ENCODE measurements at regions of chr11 and their contacts with region 1.

Region 1: GRCh38 chr11:6757373-6757967 is 14.3 kb downstream of the OR2AG2 start:
- DNase-seq: peak; percentile 12
- H3K4me3 ChIP-seq: no peak overlapping the region
- CTCF ChIP-seq: peak; percentile 62

Region 2: DNA sequence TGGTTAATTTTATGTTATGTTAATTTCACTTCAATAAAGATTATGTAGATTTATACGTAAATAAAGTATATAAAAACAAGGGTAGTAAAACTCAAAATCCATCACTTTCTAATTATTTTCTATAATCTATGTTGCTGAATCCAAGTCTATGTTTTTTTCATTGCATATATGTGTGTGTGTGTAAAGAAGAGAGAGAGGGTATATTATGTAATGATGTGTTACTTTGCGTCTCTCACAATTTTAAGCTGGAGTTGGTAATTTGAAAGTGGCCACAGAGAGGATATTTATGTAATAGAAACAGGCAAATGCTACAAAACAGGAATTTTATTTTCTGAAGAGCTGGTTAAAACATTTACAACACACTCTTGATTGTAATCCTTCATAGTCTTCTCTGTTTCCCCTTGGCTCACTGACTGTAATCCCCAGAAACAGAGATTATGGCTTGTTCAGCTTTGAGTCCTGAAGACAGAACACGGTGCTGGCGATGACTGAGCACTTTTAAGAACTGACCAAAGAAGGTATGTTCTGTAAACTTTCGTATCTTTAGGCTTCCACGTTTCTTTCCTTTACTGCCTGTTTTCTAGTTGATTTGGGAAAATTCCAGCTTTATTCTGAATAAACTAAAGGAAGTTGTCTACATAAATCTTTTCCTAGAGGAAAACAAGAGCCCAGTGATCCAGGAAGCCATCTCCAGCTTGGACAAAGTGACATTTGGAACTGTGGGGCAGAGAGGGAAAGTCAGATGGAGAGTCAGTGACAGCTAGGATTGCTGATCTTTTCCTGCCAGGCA is 29.3 kb before region 1 on chr11:
- CTCF ChIA-PET with region 1: interaction called, 141 read pairs
- POLR2A ChIA-PET with region 1: no interaction called
- DNase-seq: no peak
- H3K4me3 ChIP-seq: no peak overlapping the region
- CTCF ChIP-seq: no peak

Region 3: DNA sequence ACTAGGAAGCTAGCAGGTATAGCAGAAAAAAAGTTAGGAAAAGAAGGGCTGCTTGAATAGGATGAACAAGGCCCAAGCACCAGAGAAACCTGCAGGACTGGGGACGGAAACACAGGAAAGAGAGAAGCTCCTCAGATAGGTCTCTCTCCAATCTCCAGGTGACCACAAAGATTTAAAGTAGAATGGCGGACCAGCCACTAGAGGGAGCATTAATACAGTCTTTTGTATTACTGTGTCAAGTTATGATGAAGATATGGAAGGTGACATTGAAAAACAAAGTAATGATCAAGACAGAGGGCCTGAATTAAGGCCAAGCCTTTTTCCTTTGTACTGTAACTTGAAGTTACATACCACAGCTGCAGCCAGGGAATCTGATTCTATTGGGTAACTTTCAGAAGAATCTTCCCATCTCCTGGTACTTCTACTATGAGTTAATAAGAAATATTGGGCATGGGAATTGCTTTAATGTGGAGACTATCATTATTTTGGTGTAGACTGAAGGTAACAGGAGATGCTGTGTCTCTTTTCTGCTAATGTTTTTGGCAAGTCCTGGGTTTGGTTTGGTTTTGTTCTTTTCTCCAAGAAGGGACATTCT is 19.5 kb before region 1 on chr11:
- CTCF ChIA-PET with region 1: interaction called, 141 read pairs
- POLR2A ChIA-PET with region 1: no interaction called
- DNase-seq: no peak
- H3K4me3 ChIP-seq: no peak overlapping the region
- CTCF ChIP-seq: peak; percentile 58

Region 4: DNA sequence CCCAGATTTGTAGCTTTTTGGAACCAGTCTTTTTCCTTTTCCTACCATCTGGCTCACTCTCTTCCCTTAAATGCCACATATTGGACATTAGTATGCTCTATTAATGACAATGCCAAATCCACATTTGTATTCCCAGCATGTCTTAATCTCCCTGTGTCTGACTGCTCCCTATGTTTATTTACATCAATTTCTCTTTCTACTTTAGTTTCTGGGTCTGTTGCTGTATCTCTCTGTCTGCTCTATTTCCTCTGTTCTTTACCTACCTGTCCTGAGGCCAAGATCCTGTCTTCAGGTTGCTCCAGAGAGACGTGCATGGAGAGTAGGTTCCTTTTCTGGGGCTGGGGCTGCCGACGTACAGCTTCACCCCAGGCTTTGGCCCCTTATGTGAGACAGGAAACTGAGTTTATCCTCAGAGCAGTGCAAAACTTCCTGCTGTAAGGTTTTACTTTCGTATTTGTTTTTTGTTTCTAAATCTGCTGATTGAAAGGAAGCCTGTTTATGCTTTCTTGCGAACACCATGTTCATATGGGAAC is 11.3 kb before region 1 on chr11:
- CTCF ChIA-PET with region 1: interaction called, 141 read pairs
- POLR2A ChIA-PET with region 1: no interaction called
- DNase-seq: no peak
- H3K4me3 ChIP-seq: no peak overlapping the region
- CTCF ChIP-seq: no peak

Region 5: GRCh38 chr11:6771926-6772893 is 14.7 kb after region 1 on chr11 and contains the start of gene OR2AG2:
- CTCF ChIA-PET with region 1: interaction called, 14 read pairs
- POLR2A ChIA-PET with region 1: no interaction called
- DNase-seq: no peak
- H3K4me3 ChIP-seq: no peak within 1 kb of the TSS
- CTCF ChIP-seq: no peak

Region 6: GRCh38 chr11:6799402-6799801 is 41.9 kb after region 1 on chr11 and contains the start of gene OR6A2:
- CTCF ChIA-PET with region 1: no interaction called
- POLR2A ChIA-PET with region 1: no interaction called
- DNase-seq: no peak
- H3K4me3 ChIP-seq: no peak within 1 kb of the TSS
- CTCF ChIP-seq: no peak

Region 7: GRCh38 chr11:6911948-6912347 is 154.5 kb after region 1 on chr11:
- CTCF ChIA-PET with region 1: no interaction called
- POLR2A ChIA-PET with region 1: no interaction called
- DNase-seq: no peak
- H3K4me3 ChIP-seq: no peak overlapping the region
- CTCF ChIP-seq: no peak

Measured in AG04449 (cell line).